Activated B cell treated with CpG ODN at 0.5 μM for 24 hours (primary cell): ENCODE measurements at regions of chr7 and their contacts with region 1.

Region 1: GRCh38 chr7:21939136-21939857 is 6.4 kb downstream of the CDCA7L start:
- DNase-seq: no peak
- ATAC-seq: peak; percentile 55
- H3K4me3 Mint-ChIP-seq: peak overlapping the region; percentile 64
- H3K27ac Mint-ChIP-seq: peak overlapping the region; percentile 75
- H3K4me1 Mint-ChIP-seq: peaks cover 93% of the 10 kb centered on the region
- H3K27me3 Mint-ChIP-seq: no peaks in the 10 kb centered on the region
- CTCF ChIP-seq: no peak

Region 2: GRCh38 chr7:21923658-21924057 is 15.6 kb before region 1 on chr7:
- CTCF ChIA-PET with region 1: no interaction called
- POLR2A ChIA-PET with region 1: interaction called, 4 read pairs
- intact Hi-C with region 1: loop called (anchors 2 kb)
- DNase-seq: no peak
- ATAC-seq: no peak
- H3K4me3 Mint-ChIP-seq: no peak overlapping the region
- H3K27ac Mint-ChIP-seq: no peak overlapping the region
- H3K4me1 Mint-ChIP-seq: peaks cover 80% of the 10 kb centered on the region
- H3K27me3 Mint-ChIP-seq: no peaks in the 10 kb centered on the region
- CTCF ChIP-seq: no peak

Region 3: GRCh38 chr7:21966271-21966670 is 27.0 kb after region 1 on chr7:
- CTCF ChIA-PET with region 1: no interaction called
- POLR2A ChIA-PET with region 1: interaction called, 70 read pairs
- intact Hi-C with region 1: loop called (anchors 1 kb)
- DNase-seq: peak; percentile 31
- ATAC-seq: peak; percentile 97
- H3K4me3 Mint-ChIP-seq: peak overlapping the region; percentile 66
- H3K27ac Mint-ChIP-seq: peak overlapping the region; percentile 87
- H3K4me1 Mint-ChIP-seq: peaks cover 63% of the 10 kb centered on the region
- H3K27me3 Mint-ChIP-seq: no peaks in the 10 kb centered on the region
- CTCF ChIP-seq: no peak

Region 4: DNA sequence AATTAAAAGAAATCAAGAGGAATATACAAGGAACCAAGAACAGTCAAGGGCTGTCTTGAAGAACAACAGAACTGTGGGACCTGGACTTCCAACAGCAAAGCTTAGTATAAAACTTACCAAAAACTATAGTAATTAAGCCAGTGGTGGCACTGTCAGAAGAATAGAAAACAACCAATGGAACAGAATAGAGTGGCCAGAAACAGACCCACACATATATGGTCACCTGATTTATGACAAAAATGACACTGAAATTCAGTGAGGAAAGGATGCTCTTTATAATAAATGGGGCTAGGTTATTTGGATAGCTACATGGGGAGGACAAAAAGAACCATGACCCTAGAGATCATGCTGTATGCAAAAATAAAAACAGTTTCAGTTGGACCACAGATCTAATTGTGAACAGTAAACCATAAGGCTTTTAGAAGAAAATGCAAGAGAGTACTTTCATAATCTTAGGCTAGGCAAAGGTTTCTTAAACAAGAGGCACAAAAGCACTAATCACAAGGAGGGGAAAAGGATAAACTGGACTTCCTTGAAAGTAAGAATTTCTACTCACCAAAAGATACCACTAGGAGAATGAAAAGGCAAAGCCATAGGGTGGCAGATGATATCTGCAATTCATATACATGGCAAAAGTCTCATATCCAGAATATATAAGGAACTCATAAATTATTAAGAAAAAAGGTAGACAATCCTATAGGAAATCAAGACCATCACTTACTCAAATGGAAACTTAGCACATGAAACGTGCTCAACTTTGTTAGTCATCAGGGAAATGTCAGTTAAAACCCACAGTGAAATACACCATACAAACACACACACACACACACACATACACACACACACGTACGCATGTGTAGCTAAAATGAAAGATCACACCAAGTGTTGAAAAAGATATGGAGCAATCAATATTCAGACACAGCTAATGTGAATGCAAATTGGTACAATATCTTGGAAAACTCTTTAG is 1053.9 kb after region 1 on chr7:
- CTCF ChIA-PET with region 1: no interaction called
- POLR2A ChIA-PET with region 1: no interaction called
- intact Hi-C with region 1: no loop called
- DNase-seq: no peak
- ATAC-seq: no peak
- H3K4me3 Mint-ChIP-seq: no peak overlapping the region
- H3K27ac Mint-ChIP-seq: no peak overlapping the region
- H3K4me1 Mint-ChIP-seq: peaks cover 43% of the 10 kb centered on the region
- H3K27me3 Mint-ChIP-seq: no peaks in the 10 kb centered on the region
- CTCF ChIP-seq: no peak